ENCODE measurements at regions of chr3 and their contacts with region 1.

Region 1: GRCh38 chr3:141311496-141312353 is 56.6 kb upstream of the ZBTB38 start:
- DNase-seq: peak; percentile 92
- ATAC-seq: peak; percentile 96
- H3K4me3 ChIP-seq: peak overlapping the region; percentile 79
- H3K27ac ChIP-seq: peak overlapping the region; percentile 85
- H3K4me1 ChIP-seq: peaks cover 18% of the 10 kb centered on the region
- H3K27me3 ChIP-seq: no peaks in the 10 kb centered on the region
- CTCF ChIP-seq: peak; percentile 79 to 95 (median 81)
- EP300 ChIP-seq: no peak
- POLR2A ChIP-seq: peak; percentile 95
- RAD21 ChIP-seq: peak; percentile 83

Region 2: DNA sequence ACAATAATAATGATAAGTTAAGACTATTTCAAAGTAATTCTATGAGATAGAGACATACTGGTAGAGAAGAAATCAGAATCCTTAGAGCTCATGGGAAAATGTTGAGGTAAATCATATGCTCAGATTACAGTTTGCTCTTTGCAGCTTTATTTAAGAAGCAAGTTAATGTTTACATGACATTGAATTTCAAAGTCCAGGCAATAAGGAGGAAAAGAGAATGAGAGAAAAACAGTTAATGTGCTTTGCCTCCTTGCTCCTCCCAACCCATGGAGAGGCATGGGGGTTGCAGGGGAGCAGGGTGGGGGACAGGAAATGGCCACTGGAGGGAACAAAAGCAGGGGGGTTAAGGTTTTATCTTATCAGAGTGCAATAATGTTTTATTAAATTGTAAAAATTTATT is 14.4 kb after region 1 on chr3:
- CTCF ChIA-PET with region 1: interaction called, 83 read pairs
- POLR2A ChIA-PET with region 1: interaction called, 8 read pairs
- RAD21 ChIA-PET with region 1: interaction called, 20 read pairs
- SMC1A ChIA-PET with region 1: interaction called, 112 read pairs
- in situ Hi-C with region 1: no loop called
- intact Hi-C with region 1: no loop called
- DNase-seq: no peak
- ATAC-seq: no peak
- H3K4me3 ChIP-seq: no peak overlapping the region
- H3K27ac ChIP-seq: no peak overlapping the region
- H3K4me1 ChIP-seq: peaks cover 19% of the 10 kb centered on the region
- H3K27me3 ChIP-seq: no peaks in the 10 kb centered on the region
- CTCF ChIP-seq: no peak
- EP300 ChIP-seq: no peak
- POLR2A ChIP-seq: no peak
- RAD21 ChIP-seq: no peak

Region 3: DNA sequence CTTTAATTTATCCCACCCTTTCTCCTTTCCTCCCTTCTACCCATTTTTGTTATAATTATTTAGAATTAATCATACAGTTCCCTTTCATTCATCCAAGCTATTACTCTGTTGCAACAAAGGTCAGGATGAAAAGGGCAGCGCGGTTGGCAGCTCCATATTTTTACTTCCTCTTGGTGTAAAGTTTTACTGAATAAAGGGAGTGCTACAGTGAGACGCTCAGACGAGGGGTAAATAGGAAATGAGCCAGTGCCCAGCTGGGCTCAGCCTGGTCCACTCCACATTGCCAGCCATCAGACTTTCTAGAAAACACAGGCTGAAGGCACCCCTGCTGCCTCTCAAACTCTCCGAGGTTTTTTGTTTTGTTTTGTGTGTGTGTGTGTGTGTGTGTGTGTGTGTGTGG is 34.7 kb after region 1 on chr3:
- CTCF ChIA-PET with region 1: interaction called, 13 read pairs
- POLR2A ChIA-PET with region 1: interaction called, 8 read pairs
- RAD21 ChIA-PET with region 1: interaction called, 8 read pairs
- SMC1A ChIA-PET with region 1: interaction called, 11 read pairs
- in situ Hi-C with region 1: no loop called
- intact Hi-C with region 1: no loop called
- DNase-seq: no peak
- ATAC-seq: peak; percentile 50
- H3K4me3 ChIP-seq: no peak overlapping the region
- H3K27ac ChIP-seq: no peak overlapping the region
- H3K4me1 ChIP-seq: peaks cover 12% of the 10 kb centered on the region; the same call in 1 of the 2 replicates
- H3K27me3 ChIP-seq: no peaks in the 10 kb centered on the region
- CTCF ChIP-seq: no peak
- EP300 ChIP-seq: no peak
- POLR2A ChIP-seq: no peak
- RAD21 ChIP-seq: no peak

Region 4: DNA sequence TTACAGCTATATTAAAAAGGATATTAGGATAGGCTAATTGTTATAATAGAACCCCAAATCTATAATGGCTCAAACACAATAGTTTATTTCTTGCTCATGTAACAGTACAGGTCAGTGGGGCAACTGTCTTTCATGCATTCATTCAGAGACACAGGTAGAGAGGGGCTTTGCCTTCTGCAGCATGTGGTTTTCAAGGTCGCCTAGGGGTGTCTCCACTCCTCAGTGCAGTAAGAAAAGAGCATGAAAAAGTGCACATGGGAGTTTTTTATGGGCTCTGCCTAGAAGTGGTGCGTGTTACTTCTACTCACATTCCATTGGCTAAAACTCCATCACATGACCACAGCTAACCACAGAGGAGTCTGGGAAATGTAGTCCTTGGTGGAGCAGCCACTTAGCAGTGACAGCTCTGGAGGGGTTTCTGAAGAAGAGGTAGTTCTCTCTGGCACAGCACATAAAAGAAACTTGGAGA is 58.4 kb after region 1 on chr3:
- CTCF ChIA-PET with region 1: interaction called, 45 read pairs
- POLR2A ChIA-PET with region 1: interaction called, 5 read pairs
- RAD21 ChIA-PET with region 1: interaction called, 42 read pairs
- SMC1A ChIA-PET with region 1: interaction called, 44 read pairs
- in situ Hi-C with region 1: no loop called
- intact Hi-C with region 1: no loop called
- DNase-seq: peak; percentile 96
- ATAC-seq: peak; percentile 87
- H3K4me3 ChIP-seq: no peak overlapping the region
- H3K27ac ChIP-seq: peak overlapping the region; percentile 35
- H3K4me1 ChIP-seq: peaks cover 53% of the 10 kb centered on the region
- H3K27me3 ChIP-seq: no peaks in the 10 kb centered on the region
- CTCF ChIP-seq: peak; percentile 52 to 75 (median 69)
- EP300 ChIP-seq: no peak
- POLR2A ChIP-seq: peak; percentile 53
- RAD21 ChIP-seq: peak; percentile 80

Region 5: DNA sequence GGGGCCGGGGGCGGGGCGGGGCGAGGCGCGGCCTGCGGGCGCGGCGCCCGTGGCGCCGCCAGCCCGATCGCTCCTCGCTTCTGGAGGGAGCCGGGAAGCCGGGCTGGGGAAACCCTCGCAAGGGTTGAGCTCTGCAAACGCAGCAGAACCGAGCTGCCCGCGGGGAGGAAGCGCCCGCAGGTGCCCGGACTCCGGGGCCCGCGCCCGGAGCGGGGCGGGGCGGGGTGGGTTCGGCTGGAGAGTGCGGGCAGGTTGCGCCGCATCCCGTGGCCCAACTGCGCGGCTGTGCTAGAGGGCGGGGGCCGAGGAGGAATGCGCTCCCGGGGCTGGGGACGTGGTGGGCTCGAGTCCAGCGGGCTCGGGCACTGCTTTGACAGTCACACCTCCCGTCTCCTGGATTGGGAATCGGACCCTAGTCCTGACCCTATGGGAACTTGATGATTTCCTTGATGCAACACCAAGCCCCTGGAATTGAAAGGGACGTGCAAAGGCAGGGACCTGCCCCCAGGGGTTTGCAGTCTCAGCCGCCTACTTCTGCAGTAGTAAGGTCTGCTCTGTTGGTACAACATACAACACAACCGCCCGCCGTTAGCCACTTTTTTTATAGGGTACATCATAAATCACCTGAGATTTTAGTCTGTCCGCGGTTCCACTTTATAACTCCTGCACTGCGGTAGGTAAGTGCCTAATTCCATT is 90.9 kb after region 1 on chr3:
- CTCF ChIA-PET with region 1: interaction called, 7 read pairs
- POLR2A ChIA-PET with region 1: interaction called, 3 read pairs
- RAD21 ChIA-PET with region 1: interaction called, 11 read pairs
- SMC1A ChIA-PET with region 1: interaction called, 13 read pairs
- in situ Hi-C with region 1: no loop called
- intact Hi-C with region 1: no loop called
- DNase-seq: no peak
- ATAC-seq: peak; percentile 61
- H3K4me3 ChIP-seq: peak overlapping the region; percentile 72
- H3K27ac ChIP-seq: peak overlapping the region; percentile 92
- H3K4me1 ChIP-seq: peaks cover 29% of the 10 kb centered on the region
- H3K27me3 ChIP-seq: no peaks in the 10 kb centered on the region
- CTCF ChIP-seq: no peak
- EP300 ChIP-seq: no peak
- POLR2A ChIP-seq: peak; percentile 63
- RAD21 ChIP-seq: no peak

Region 6: GRCh38 chr3:141431411-141432378 is 120.0 kb after region 1 on chr3:
- CTCF ChIA-PET with region 1: interaction called, 4 read pairs
- POLR2A ChIA-PET with region 1: no interaction called
- RAD21 ChIA-PET with region 1: no interaction called
- SMC1A ChIA-PET with region 1: interaction called, 18 read pairs
- in situ Hi-C with region 1: no loop called
- intact Hi-C with region 1: no loop called
- DNase-seq: no peak
- ATAC-seq: no peak
- H3K4me3 ChIP-seq: no peak overlapping the region
- H3K27ac ChIP-seq: no peak overlapping the region
- H3K4me1 ChIP-seq: peaks cover 5% of the 10 kb centered on the region; the same call in 1 of the 2 replicates
- H3K27me3 ChIP-seq: no peaks in the 10 kb centered on the region
- CTCF ChIP-seq: no peak
- EP300 ChIP-seq: no peak
- POLR2A ChIP-seq: no peak
- RAD21 ChIP-seq: no peak

Region 7: DNA sequence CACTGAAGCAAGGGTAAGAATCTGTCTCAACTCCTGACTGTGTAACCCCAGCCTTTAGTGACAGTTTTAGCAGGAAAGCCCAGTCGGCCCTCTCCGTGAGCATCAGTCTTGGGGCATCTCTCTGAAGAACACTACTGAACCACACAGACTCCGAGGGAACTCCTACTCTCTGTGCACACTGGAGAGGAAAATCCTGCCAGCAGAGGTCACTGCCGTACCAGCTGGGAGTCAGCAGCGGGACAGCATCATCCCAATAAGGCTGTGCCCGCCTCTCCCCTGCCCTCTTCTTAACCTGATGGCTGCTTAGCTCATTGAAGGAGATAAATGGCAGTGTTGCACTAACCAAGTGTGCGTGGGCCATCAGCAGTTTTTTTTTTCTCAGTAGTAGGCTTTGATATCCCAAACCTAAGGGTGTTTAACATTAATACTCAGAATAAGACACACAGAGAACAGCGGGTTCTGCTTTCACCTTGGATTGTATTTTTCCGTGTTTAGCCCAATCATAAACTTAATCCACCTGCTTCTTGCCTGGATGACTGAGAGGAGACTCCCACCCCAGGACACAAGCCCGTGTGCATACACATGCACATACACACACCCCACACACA is 148.5 kb after region 1 on chr3:
- CTCF ChIA-PET with region 1: interaction called, 642 read pairs
- POLR2A ChIA-PET with region 1: interaction called, 33 read pairs
- RAD21 ChIA-PET with region 1: interaction called, 164 read pairs
- SMC1A ChIA-PET with region 1: interaction called, 405 read pairs
- in situ Hi-C with region 1: no loop called
- intact Hi-C with region 1: no loop called
- DNase-seq: no peak
- ATAC-seq: peak; percentile 100
- H3K4me3 ChIP-seq: no peak overlapping the region
- H3K27ac ChIP-seq: no peak overlapping the region
- H3K4me1 ChIP-seq: peaks cover 3% of the 10 kb centered on the region; the same call in 1 of the 2 replicates
- H3K27me3 ChIP-seq: no peaks in the 10 kb centered on the region
- CTCF ChIP-seq: peak; percentile 79 to 96 (median 87)
- EP300 ChIP-seq: no peak
- POLR2A ChIP-seq: no peak
- RAD21 ChIP-seq: peak; percentile 89